IMR-90 (cell line): ENCODE measurements at regions of chr2 and their contacts with region 1.

Region 1: GRCh38 chr2:223442847-223443246 is 159.3 kb downstream of the SCG2 start:
- DNase-seq: peak; percentile 11
- ATAC-seq: no peak
- H3K4me3 ChIP-seq: no peak overlapping the region
- H3K27ac ChIP-seq: no peak overlapping the region
- H3K4me1 ChIP-seq: no peaks in the 10 kb centered on the region
- H3K27me3 ChIP-seq: no peaks in the 10 kb centered on the region
- CTCF ChIP-seq: no peak
- POLR2A ChIP-seq: no peak
- RAD21 ChIP-seq: no peak

Region 2: GRCh38 chr2:223363085-223363484 is 79.8 kb before region 1 on chr2:
- CTCF ChIA-PET with region 1: no interaction called
- POLR2A ChIA-PET with region 1: no interaction called
- dilution Hi-C with region 1: no loop called
- in situ Hi-C with region 1: no loop called
- intact Hi-C with region 1: loop called (anchors 1 kb)
- DNase-seq: no peak
- ATAC-seq: no peak
- H3K4me3 ChIP-seq: no peak overlapping the region
- H3K27ac ChIP-seq: no peak overlapping the region
- H3K4me1 ChIP-seq: no peaks in the 10 kb centered on the region
- H3K27me3 ChIP-seq: no peaks in the 10 kb centered on the region
- CTCF ChIP-seq: no peak
- POLR2A ChIP-seq: no peak
- RAD21 ChIP-seq: no peak

Region 3: GRCh38 chr2:223383315-223383714 is 59.5 kb before region 1 on chr2:
- CTCF ChIA-PET with region 1: no interaction called
- POLR2A ChIA-PET with region 1: no interaction called
- dilution Hi-C with region 1: no loop called
- in situ Hi-C with region 1: no loop called
- intact Hi-C with region 1: no loop called
- DNase-seq: peak; percentile 1
- ATAC-seq: no peak
- H3K4me3 ChIP-seq: no peak overlapping the region
- H3K27ac ChIP-seq: no peak overlapping the region
- H3K4me1 ChIP-seq: no peaks in the 10 kb centered on the region
- H3K27me3 ChIP-seq: no peaks in the 10 kb centered on the region
- CTCF ChIP-seq: no peak
- POLR2A ChIP-seq: no peak
- RAD21 ChIP-seq: no peak